Mammary epithelial cell (primary cell): ENCODE measurements at regions of chr10 and their contacts with region 1.

Region 1: DNA sequence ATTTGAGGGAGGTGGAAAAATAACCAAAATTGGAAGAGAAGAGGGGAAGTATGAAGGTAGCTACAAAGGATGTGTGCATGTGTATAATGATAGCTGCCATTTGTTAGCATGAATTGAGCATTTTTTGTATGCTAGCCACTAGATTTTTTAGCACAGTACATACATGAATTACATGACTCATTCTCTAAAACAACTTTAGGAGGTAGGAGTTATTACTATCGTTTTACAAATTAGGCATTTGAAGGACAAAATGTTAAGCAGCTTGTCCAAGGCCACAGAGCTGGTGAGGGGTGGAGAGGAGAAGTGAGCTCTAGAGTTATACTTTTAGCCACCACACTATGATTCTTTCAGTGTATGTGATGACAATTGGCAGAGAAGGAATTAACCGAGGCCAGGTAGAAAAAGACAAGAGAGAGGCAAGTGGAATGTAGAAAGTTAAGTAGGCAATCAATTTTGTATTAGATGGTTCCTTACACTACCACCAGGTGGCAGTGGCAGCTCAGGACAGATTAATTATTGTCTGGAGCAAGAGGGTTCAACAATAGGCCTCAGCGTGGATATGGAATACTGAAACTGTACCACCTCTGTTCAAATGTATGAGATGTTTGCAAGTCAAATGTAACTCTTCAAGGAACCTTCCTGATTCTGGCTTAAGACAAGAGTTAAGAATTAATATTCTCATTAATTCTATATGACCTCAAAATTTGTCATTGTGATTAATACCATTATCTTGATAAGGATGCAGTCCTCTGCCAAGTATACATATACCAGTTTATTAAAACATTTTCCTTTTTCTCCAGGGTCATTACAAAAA is 128.0 kb downstream of the MBL2 start:
- DNase-seq: peak; percentile 35
- H3K4me3 ChIP-seq: no peak overlapping the region
- H3K27ac ChIP-seq: no peak overlapping the region
- H3K4me1 ChIP-seq: no peaks in the 10 kb centered on the region
- H3K27me3 ChIP-seq: peaks cover 2% of the 10 kb centered on the region
- CTCF ChIP-seq: peak; percentile 66 to 75

Region 2: DNA sequence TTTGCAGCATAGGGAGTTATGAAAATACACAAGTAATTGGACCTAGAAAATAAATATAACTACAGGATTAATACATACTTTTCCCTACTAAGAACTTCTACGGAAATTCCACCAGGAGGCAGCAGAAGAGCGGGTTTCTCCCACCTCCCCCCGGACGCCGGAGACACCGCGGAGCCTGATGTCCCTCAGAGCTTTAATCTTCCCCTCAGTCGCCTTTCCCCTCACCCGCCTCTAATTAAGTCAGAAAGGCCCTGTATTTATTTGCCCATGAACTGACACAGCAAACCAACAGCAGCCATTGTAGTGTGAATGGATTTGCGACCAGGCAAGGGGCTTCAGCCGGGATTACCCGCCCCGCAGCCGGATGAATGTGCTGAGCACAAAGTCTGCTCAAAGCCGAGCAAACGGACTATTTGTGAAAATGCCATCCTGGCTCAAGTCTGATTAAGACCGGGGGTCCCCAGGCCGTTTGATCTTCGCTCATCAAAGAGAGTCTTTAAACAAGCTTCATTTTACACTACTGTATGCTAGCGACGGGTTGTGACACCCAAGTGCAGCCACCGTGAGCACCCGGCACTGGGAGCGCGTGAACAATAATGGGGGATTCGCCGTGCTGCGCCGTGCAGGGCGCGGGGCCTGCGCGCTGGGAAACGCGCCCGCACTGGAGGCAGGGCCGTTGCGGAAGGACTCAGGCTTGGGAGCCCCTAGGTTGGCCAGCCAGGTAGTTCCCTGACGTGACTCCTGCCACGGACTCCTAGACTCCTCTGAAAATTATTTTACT is 336.1 kb before region 1 on chr10:
- CTCF ChIA-PET with region 1: no interaction called
- dilution Hi-C with region 1: no loop called
- in situ Hi-C with region 1: no loop called
- intact Hi-C with region 1: loop called (anchors 1 kb)
- DNase-seq: peak; percentile 45
- H3K4me3 ChIP-seq: peak overlapping the region; percentile 42 to 50 (median 45)
- H3K27ac ChIP-seq: peak overlapping the region; percentile 40
- H3K4me1 ChIP-seq: peaks cover 17% of the 10 kb centered on the region
- H3K27me3 ChIP-seq: no peaks in the 10 kb centered on the region
- CTCF ChIP-seq: peak; percentile 46 to 72

Region 3: GRCh38 chr10:52729271-52730104 is 84.9 kb after region 1 on chr10:
- CTCF ChIA-PET with region 1: interaction called, 5 read pairs
- dilution Hi-C with region 1: no loop called
- in situ Hi-C with region 1: loop called in 1 of 2 experiments (anchors 25 kb)
- intact Hi-C with region 1: loop called (anchors 1 kb)
- DNase-seq: peak; percentile 18
- H3K4me3 ChIP-seq: no peak overlapping the region
- H3K27ac ChIP-seq: no peak overlapping the region
- H3K4me1 ChIP-seq: no peaks in the 10 kb centered on the region
- H3K27me3 ChIP-seq: no peaks in the 10 kb centered on the region
- CTCF ChIP-seq: peak; percentile 49 to 56

Region 4: GRCh38 chr10:52740913-52741675 is 96.5 kb after region 1 on chr10:
- CTCF ChIA-PET with region 1: no interaction called
- dilution Hi-C with region 1: no loop called
- in situ Hi-C with region 1: loop called (anchors 5 to 25 kb)
- intact Hi-C with region 1: no loop called
- DNase-seq: no peak
- H3K4me3 ChIP-seq: no peak overlapping the region
- H3K27ac ChIP-seq: no peak overlapping the region
- H3K4me1 ChIP-seq: peaks cover 11% of the 10 kb centered on the region
- H3K27me3 ChIP-seq: no peaks in the 10 kb centered on the region
- CTCF ChIP-seq: peak; percentile 90 to 97

Region 5: GRCh38 chr10:52779541-52780390 is 135.2 kb after region 1 on chr10:
- CTCF ChIA-PET with region 1: interaction called, 8 read pairs
- dilution Hi-C with region 1: no loop called
- in situ Hi-C with region 1: no loop called
- intact Hi-C with region 1: loop called (anchors 1 kb)
- DNase-seq: peak; percentile 37
- H3K4me3 ChIP-seq: no peak overlapping the region
- H3K27ac ChIP-seq: no peak overlapping the region
- H3K4me1 ChIP-seq: no peaks in the 10 kb centered on the region
- H3K27me3 ChIP-seq: no peaks in the 10 kb centered on the region
- CTCF ChIP-seq: peak; percentile 96 to 99